ENCODE measurements at regions of chr14 and their contacts with region 1.

Region 1: DNA sequence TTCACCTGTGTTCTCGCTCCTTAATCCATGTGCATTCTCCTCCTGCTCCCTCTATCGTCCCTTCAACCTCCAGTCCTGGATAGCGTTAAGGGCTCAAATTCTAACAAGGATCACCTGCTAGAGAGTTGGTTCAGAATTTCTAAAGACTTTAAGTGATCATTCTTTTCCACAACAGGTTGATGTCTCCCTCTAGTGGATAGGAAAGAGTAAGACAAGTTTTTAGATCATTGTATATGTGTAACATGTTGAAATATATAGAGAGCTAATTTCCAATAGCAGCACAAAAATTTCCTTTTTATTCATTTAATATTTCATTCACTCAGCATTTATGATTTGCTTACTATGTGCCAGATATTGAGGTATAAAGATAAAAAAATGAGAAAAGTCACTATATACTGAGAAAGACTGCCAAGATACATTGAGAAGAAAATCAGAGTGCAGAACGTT is 9.3 kb upstream of the ESR2 start:
- DNase-seq: peak; percentile 70
- ATAC-seq: peak; percentile 69
- H3K4me3 ChIP-seq: no peak overlapping the region
- H3K4me3 Mint-ChIP-seq: no peak overlapping the region
- H3K27ac ChIP-seq: no peak overlapping the region
- H3K27ac Mint-ChIP-seq: no peak overlapping the region
- H3K4me1 ChIP-seq: no peaks in the 10 kb centered on the region
- H3K4me1 Mint-ChIP-seq: peaks cover 2% of the 10 kb centered on the region
- H3K27me3 ChIP-seq: no peaks in the 10 kb centered on the region
- H3K27me3 Mint-ChIP-seq: no peaks in the 10 kb centered on the region
- CTCF ChIP-seq: peak; percentile 94

Region 2: DNA sequence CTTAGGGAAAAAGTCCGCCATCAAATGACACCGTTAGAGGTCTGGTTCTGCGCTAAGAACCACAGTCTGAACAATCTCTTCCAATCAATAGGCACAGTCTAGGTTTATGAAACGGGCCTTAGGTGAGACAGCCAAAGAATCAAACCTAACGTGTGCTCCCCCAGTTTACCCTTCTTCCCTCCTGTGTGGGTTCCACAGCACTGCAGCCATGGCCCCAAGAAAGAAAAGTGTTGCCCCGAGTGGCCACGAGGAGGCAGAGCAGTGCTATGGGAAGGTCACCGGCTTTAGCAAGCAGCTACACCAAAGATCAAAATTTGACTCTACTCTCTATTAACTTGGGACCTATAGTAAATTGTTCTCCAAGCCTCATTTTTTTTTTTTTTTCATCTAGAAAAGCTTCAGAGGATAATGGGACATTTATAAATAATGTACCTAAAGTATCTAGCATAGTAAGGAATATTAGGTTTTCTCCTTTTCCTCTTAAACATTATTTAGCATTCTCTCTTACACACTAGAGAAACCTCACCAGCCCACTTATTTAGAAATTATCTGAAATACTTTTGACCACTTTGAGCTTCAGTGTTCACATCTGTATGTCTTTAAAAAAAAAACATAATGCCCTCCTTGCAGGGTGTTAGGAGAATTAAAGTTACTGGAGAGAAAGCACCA is 914.6 kb before region 1 on chr14:
- CTCF ChIA-PET with region 1: interaction called, 9 read pairs
- POLR2A ChIA-PET with region 1: no interaction called
- intact Hi-C with region 1: loop called (anchors 5 kb)
- DNase-seq: peak; percentile 45
- ATAC-seq: peak; percentile 36
- H3K4me3 ChIP-seq: no peak overlapping the region
- H3K4me3 Mint-ChIP-seq: no peak overlapping the region
- H3K27ac ChIP-seq: no peak overlapping the region
- H3K27ac Mint-ChIP-seq: no peak overlapping the region
- H3K4me1 ChIP-seq: peaks cover 0 to 1% of the 10 kb centered on the region in 2 donors
- H3K4me1 Mint-ChIP-seq: peaks cover 5% of the 10 kb centered on the region
- H3K27me3 ChIP-seq: no peaks in the 10 kb centered on the region
- H3K27me3 Mint-ChIP-seq: no peaks in the 10 kb centered on the region
- CTCF ChIP-seq: peak; percentile 74

Region 3: GRCh38 chr14:64005822-64006221 is 297.7 kb before region 1 on chr14:
- CTCF ChIA-PET with region 1: interaction called, 63 read pairs
- POLR2A ChIA-PET with region 1: no interaction called
- intact Hi-C with region 1: loop called (anchors 1 kb)
- DNase-seq: no peak
- ATAC-seq: no peak
- H3K4me3 ChIP-seq: no peak overlapping the region
- H3K4me3 Mint-ChIP-seq: no peak overlapping the region
- H3K27ac ChIP-seq: no peak overlapping the region
- H3K27ac Mint-ChIP-seq: no peak overlapping the region
- H3K4me1 ChIP-seq: peaks cover 0 to 3% of the 10 kb centered on the region in 2 donors
- H3K4me1 Mint-ChIP-seq: peaks cover 8% of the 10 kb centered on the region
- H3K27me3 ChIP-seq: no peaks in the 10 kb centered on the region
- H3K27me3 Mint-ChIP-seq: no peaks in the 10 kb centered on the region
- CTCF ChIP-seq: no peak

Region 4: GRCh38 chr14:64137657-64138290 is 165.7 kb before region 1 on chr14:
- CTCF ChIA-PET with region 1: interaction called, 82 read pairs
- POLR2A ChIA-PET with region 1: no interaction called
- intact Hi-C with region 1: no loop called
- DNase-seq: peak; percentile 33
- ATAC-seq: no peak
- H3K4me3 ChIP-seq: no peak overlapping the region
- H3K4me3 Mint-ChIP-seq: no peak overlapping the region
- H3K27ac ChIP-seq: no peak overlapping the region
- H3K27ac Mint-ChIP-seq: no peak overlapping the region
- H3K4me1 ChIP-seq: no peaks in the 10 kb centered on the region
- H3K4me1 Mint-ChIP-seq: no peaks in the 10 kb centered on the region
- H3K27me3 ChIP-seq: no peaks in the 10 kb centered on the region
- H3K27me3 Mint-ChIP-seq: no peaks in the 10 kb centered on the region
- CTCF ChIP-seq: no peak

Region 5: GRCh38 chr14:64253672-64254071 is 49.8 kb before region 1 on chr14:
- CTCF ChIA-PET with region 1: interaction called, 10 read pairs
- POLR2A ChIA-PET with region 1: no interaction called
- intact Hi-C with region 1: no loop called
- DNase-seq: no peak
- ATAC-seq: no peak
- H3K4me3 ChIP-seq: no peak overlapping the region
- H3K4me3 Mint-ChIP-seq: no peak overlapping the region
- H3K27ac ChIP-seq: no peak overlapping the region
- H3K27ac Mint-ChIP-seq: no peak overlapping the region
- H3K4me1 ChIP-seq: no peaks in the 10 kb centered on the region
- H3K4me1 Mint-ChIP-seq: no peaks in the 10 kb centered on the region
- H3K27me3 ChIP-seq: no peaks in the 10 kb centered on the region
- H3K27me3 Mint-ChIP-seq: no peaks in the 10 kb centered on the region
- CTCF ChIP-seq: no peak

Region 6: GRCh38 chr14:64340560-64341196 is 37.2 kb after region 1 on chr14:
- CTCF ChIA-PET with region 1: no interaction called
- POLR2A ChIA-PET with region 1: no interaction called
- intact Hi-C with region 1: no loop called
- DNase-seq: no peak
- ATAC-seq: no peak
- H3K4me3 ChIP-seq: no peak overlapping the region
- H3K4me3 Mint-ChIP-seq: peak overlapping the region; percentile 50
- H3K27ac ChIP-seq: no peak overlapping the region
- H3K27ac Mint-ChIP-seq: peak overlapping the region; percentile 7
- H3K4me1 ChIP-seq: peaks cover 14 to 17% of the 10 kb centered on the region in 2 donors
- H3K4me1 Mint-ChIP-seq: peaks cover 29% of the 10 kb centered on the region
- H3K27me3 ChIP-seq: no peaks in the 10 kb centered on the region
- H3K27me3 Mint-ChIP-seq: no peaks in the 10 kb centered on the region
- CTCF ChIP-seq: no peak

Region 7: GRCh38 chr14:64540208-64541157 is 237.0 kb after region 1 on chr14 and contains the start of gene HSPA2:
- CTCF ChIA-PET with region 1: no interaction called
- POLR2A ChIA-PET with region 1: no interaction called
- intact Hi-C with region 1: no loop called
- DNase-seq: peak; percentile 98
- ATAC-seq: peak; percentile 90
- H3K4me3 ChIP-seq: peak within 1 kb of the TSS; percentile 74 to 98 (median 85)
- H3K4me3 Mint-ChIP-seq: peak within 1 kb of the TSS; percentile 100
- H3K27ac ChIP-seq: peak within 1 kb of the TSS; percentile 60 to 67
- H3K27ac Mint-ChIP-seq: peak within 1 kb of the TSS; percentile 97
- H3K4me1 ChIP-seq: peaks cover 26 to 32% of the 10 kb centered on the region in 2 donors
- H3K4me1 Mint-ChIP-seq: peaks cover 31% of the 10 kb centered on the region
- H3K27me3 ChIP-seq: peaks cover 0 to 19% (median 5%) of the 10 kb centered on the region in 4 experiments
- H3K27me3 Mint-ChIP-seq: peaks cover 5% of the 10 kb centered on the region
- CTCF ChIP-seq: peak; percentile 78
- total RNA-seq, gene HSPA2: 14.9 and 19.6 TPM in 2 replicates

Measured in B cell (primary cell).